IMR-90 (cell line): ENCODE measurements at regions of chr15 and their contacts with region 1.

Region 1: DNA sequence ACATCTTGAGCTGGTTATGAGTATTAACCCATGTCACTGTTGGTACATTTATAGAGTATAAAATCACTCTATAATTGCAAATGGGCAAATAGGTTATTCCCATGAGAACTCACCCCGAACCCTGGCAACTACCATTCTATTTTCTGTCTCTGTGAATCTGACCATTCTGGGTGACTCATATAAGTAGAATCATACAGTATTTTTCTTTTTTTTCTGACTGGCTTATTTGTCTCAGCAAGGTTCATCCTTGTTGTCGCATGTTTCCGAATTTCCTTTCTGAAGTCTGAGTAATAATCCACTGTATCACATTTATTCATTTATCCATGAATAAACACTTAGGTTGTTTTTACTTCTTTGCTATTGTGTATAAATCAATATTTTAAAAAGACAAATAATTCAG is 59.9 kb upstream of the CHRM5 start:
- DNase-seq: peak; percentile 59
- ATAC-seq: peak; percentile 56
- H3K4me3 ChIP-seq: no peak overlapping the region
- H3K27ac ChIP-seq: no peak overlapping the region
- H3K4me1 ChIP-seq: peaks cover 11% of the 10 kb centered on the region
- H3K27me3 ChIP-seq: no peaks in the 10 kb centered on the region
- CTCF ChIP-seq: no peak
- POLR2A ChIP-seq: no peak
- RAD21 ChIP-seq: no peak

Region 2: DNA sequence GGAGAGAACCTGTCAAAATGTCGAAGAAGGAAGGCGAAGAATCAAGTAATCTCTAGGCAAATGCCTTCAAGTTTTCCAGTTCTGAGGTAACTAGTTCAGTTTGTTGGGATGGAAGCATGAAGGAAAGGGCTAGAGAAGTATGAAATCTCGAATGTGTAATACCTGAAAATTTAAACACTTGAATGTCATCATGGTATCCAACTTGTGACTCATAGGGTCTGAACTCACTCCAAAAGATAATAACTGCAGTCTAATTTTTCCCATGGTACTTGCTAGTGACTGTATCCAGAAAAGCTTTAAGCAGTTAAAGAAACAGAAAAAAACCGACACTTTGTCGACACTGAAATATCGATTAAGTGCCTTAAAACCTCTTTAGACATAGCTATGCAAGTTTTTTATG is 43.0 kb before region 1 on chr15:
- CTCF ChIA-PET with region 1: no interaction called
- POLR2A ChIA-PET with region 1: no interaction called
- dilution Hi-C with region 1: no loop called
- in situ Hi-C with region 1: no loop called
- intact Hi-C with region 1: loop called (anchors 5 kb)
- DNase-seq: peak; percentile 78
- ATAC-seq: peak; percentile 43
- H3K4me3 ChIP-seq: no peak overlapping the region
- H3K27ac ChIP-seq: no peak overlapping the region
- H3K4me1 ChIP-seq: peaks cover 13% of the 10 kb centered on the region
- H3K27me3 ChIP-seq: no peaks in the 10 kb centered on the region
- CTCF ChIP-seq: no peak
- POLR2A ChIP-seq: no peak
- RAD21 ChIP-seq: no peak